ENCODE measurements at regions of chr2 and their contacts with region 1.

Region 1: GRCh38 chr2:177618255-177619253 is 226.0 kb downstream of the AGPS start:
- DNase-seq: peak; percentile 90
- H3K4me3 Mint-ChIP-seq: peak overlapping the region; percentile 84
- H3K27ac Mint-ChIP-seq: peak overlapping the region; percentile 98
- H3K4me1 Mint-ChIP-seq: no peaks in the 10 kb centered on the region
- H3K27me3 Mint-ChIP-seq: no peaks in the 10 kb centered on the region
- CTCF ChIP-seq: no peak

Region 2: GRCh38 chr2:177552422-177553175 is 66.0 kb before region 1 on chr2:
- CTCF ChIA-PET with region 1: no interaction called
- intact Hi-C with region 1: loop called (anchors 5 kb)
- DNase-seq: peak; percentile 88
- H3K4me3 Mint-ChIP-seq: peak overlapping the region; percentile 94
- H3K27ac Mint-ChIP-seq: peak overlapping the region; percentile 99
- H3K4me1 Mint-ChIP-seq: no peaks in the 10 kb centered on the region
- H3K27me3 Mint-ChIP-seq: no peaks in the 10 kb centered on the region
- CTCF ChIP-seq: no peak